Activated CD4-positive, alpha-beta T cell treated with anti-CD3 and anti-CD28 coated beads, Interleukin-2, amount 10 ng/mL, durations not matched to agents 24 days and 14 days (primary cell): ENCODE measurements at regions of chr14 and their contacts with region 1.

Region 1: DNA sequence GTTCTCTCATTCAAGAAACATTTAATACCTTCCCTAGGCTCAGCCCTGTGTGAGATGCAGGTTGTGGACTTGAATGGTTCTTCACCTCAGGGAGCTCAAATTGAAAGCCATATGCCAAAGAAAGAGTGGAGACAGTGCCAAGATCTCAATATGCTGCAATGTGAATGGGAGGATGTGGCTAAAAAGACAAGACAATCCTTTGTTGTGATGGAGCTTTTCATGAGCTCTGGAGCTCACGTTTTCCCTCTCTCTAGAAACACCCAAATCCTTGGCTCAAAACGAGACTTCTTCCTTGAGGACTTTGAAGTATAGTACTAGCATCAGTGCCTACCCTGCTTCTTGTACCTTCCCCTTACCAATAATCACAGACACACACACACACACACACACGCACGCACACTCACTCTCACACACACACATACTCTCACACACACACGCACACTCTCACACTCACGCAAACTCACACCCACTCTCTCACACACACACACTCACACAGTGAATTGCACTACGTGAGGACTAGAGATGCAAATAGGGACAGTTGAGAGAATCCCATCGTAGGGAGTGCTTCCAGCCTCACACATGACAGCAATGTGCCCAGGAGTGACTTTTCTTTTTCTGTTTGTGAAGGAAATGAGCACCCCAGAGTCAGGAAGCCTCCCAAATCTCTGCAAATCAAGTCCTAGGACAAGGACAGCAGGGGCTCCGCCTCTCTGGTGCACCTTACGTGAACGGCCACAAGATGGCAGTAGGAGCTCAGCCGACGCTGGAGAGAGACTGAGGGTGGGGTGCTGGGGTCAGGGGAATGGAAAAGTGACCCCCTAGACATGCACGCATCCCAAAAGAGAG is 231.4 kb downstream of the PCNX1 start:
- DNase-seq: peak; percentile 89
- H3K4me3 Mint-ChIP-seq: no peak overlapping the region
- H3K27ac Mint-ChIP-seq: no peak overlapping the region
- H3K4me1 Mint-ChIP-seq: peaks cover 39% of the 10 kb centered on the region
- H3K27me3 Mint-ChIP-seq: no peaks in the 10 kb centered on the region

Region 2: DNA sequence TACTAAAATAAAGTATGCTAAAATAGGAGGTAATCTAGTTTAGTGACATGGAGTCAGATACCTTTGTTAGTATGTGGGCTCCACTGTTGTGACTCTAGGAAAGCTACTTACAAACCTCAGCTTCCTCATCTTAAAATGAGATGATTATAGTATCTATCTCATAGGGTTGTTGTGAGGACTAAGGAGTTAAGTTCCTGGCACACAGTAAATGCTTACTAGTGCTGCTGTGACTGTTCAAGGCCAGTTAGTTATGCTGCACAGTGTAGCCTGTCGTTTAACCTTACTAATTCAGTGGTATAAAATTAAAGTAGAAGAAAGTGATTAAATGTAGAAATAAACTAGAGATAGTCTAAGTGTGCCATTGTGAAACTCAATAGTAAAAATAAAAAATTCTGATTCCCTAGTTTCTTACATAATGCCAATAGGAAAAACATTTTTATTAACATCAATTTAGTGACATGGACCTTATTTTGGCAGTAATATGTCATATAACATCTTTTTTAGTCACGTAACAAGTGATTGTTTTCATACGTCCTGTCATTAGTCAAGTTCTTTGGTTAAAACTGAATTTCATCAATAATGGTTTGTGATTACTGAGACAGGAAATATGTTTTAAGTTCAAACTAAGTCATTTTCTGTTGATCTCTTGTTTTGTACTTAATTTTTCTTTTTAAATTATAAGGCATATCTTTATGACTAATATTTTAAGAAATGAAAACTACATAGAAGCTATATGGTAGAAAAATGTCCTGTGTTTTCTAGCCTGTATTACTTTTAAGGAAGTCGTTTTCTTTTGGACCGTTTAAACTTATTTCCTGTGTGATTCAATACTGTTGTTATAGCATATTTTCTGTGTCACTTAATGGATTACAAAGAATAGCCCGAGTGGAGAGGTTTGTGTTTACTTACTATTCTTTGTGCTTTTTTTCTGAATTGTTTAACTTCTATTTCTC is 157.4 kb before region 1 on chr14:
- intact Hi-C with region 1: no loop called
- DNase-seq: no peak
- H3K4me3 Mint-ChIP-seq: peak overlapping the region; percentile 56
- H3K27ac Mint-ChIP-seq: peak overlapping the region; percentile 60
- H3K4me1 Mint-ChIP-seq: peaks cover 23% of the 10 kb centered on the region
- H3K27me3 Mint-ChIP-seq: no peaks in the 10 kb centered on the region

Region 3: GRCh38 chr14:71221119-71221518 is 82.4 kb after region 1 on chr14:
- intact Hi-C with region 1: loop called (anchors 1 kb)
- DNase-seq: no peak
- H3K4me3 Mint-ChIP-seq: no peak overlapping the region
- H3K27ac Mint-ChIP-seq: no peak overlapping the region
- H3K4me1 Mint-ChIP-seq: peaks cover 15% of the 10 kb centered on the region
- H3K27me3 Mint-ChIP-seq: no peaks in the 10 kb centered on the region

Region 4: DNA sequence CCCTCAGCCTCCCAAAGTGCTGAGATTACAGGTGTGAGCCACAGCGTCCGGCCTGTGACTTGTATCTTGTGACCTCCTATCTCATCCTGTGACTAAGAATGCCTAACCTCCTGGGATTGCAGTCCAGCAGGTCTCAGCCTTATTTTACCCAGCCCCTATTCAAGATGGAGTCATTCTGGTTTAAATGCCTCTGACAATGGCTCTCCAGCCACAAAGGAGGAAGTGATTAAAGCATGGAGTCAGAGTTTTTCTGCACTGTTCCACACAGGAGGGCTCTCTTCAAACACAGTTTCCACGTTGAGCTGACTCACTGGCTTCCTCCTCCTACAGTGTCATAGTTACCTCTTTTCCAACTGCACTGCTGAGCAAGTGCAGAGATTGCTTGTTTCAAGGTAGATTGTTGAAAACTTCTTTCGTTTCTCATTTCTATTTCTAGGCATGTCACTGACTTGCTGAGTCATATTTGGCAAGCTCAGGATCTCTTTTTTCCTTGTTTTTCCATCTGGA is 152.3 kb after region 1 on chr14:
- intact Hi-C with region 1: loop called (anchors 1 kb)
- DNase-seq: peak; percentile 73
- H3K4me3 Mint-ChIP-seq: no peak overlapping the region
- H3K27ac Mint-ChIP-seq: peak overlapping the region; percentile 87
- H3K4me1 Mint-ChIP-seq: peaks cover 18% of the 10 kb centered on the region
- H3K27me3 Mint-ChIP-seq: no peaks in the 10 kb centered on the region

Region 5: DNA sequence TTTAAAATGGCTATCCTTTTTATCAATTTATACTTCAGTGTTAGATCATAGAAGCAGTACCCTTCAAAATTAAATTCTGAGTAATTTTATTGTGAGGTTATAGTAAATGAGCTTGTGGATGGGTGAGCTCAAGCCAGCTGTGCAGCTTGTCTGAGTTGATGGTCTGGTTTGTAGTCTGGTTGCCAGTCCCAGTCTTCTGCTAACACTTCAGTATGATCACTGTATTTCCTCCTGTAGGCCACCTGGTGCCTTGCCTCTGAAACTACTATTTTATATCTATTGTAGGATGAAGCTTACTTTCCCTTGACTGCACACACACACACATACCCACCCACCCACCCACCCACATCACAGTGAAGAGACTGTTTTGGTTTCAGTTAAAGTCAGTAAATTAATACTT is 265.0 kb after region 1 on chr14:
- intact Hi-C with region 1: loop called (anchors 1 kb)
- DNase-seq: peak; percentile 81
- H3K4me3 Mint-ChIP-seq: no peak overlapping the region
- H3K27ac Mint-ChIP-seq: peak overlapping the region; percentile 36
- H3K4me1 Mint-ChIP-seq: peaks cover 40% of the 10 kb centered on the region
- H3K27me3 Mint-ChIP-seq: no peaks in the 10 kb centered on the region

Region 6: DNA sequence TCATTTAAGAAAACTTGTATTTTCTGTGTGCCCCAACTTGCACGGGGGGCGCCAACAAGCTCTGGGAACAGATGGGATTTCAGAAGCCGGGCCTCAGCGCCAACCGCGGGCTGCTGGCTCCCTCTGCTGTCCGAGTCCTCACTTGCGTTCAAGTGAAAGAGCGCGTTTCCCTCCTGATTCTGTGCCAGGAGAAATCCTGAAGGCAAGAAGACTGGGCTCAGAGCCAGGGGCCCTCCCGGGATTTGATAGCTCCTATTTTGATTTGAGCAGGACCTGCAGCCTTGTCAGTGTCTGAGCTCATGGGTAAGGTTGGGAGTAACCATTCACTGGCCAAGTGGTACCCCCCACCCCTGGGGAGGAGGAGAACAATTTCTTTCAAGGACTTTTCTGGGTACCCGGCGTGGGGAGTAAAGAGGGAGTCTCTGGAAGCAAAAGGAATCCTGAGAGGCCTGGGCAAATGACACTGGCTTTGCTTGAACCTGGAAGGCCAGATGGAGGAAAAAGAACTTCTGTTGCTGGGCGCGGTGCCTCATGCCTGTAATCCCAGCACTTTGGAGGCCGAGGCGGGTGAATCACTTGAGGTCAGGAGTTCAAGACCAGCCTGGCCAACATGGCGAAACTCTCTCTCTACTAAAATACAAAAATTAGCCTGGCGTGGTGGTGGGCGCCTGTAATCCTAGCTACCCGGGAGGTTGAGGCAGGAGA is 614.6 kb after region 1 on chr14:
- intact Hi-C with region 1: loop called (anchors 1 kb)
- DNase-seq: peak; percentile 90
- H3K4me3 Mint-ChIP-seq: peak overlapping the region; percentile 35
- H3K27ac Mint-ChIP-seq: no peak overlapping the region
- H3K4me1 Mint-ChIP-seq: peaks cover 9% of the 10 kb centered on the region
- H3K27me3 Mint-ChIP-seq: peaks cover 2% of the 10 kb centered on the region